MCF 10A (cell line): ENCODE measurements at regions of chr6 and their contacts with region 1.

Region 1: DNA sequence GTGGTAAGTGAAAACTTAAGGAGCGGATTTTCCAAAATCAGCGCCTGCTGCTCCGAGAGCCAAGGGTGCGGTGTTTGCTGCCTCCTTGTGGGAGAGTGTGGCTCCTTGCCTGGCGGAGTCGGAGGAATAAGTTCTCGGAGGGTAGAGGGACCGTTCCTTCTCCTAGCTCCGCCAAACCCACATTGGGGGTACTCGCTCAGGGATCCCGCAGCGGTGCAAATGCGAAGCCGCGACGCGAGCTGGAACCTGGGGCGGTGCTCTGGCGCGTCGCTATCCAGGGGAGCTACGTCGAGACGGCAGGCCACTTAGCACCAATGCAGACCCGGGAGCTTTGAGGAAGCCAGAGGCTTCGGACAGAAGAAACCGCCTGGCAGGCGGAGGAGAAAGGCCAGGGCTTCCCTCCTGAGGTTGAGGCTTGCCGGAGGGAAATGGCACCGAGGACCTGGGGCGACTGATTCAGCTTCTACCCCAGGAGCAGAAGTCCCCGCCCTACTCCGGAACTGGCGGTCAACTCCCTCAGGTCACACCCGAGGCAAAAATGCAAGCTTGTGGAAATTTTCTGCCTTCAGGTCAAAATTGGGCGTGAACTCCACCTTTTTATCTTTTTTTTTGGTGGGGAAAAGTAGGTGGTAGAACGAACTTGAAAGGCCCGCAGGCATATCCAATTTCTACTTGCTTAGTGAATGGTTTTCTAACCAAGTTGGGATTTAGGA is 5.7 kb upstream of the DDX43 start:
- DNase-seq: peak; percentile 74
- H3K4me3 Mint-ChIP-seq: peak overlapping the region; percentile 83
- H3K27ac Mint-ChIP-seq: peak overlapping the region; percentile 51
- H3K4me1 Mint-ChIP-seq: no peaks in the 10 kb centered on the region
- H3K27me3 Mint-ChIP-seq: no peaks in the 10 kb centered on the region
- CTCF ChIP-seq: peak; percentile 77

Region 2: GRCh38 chr6:73129653-73130443 is 259.1 kb before region 1 on chr6:
- CTCF ChIA-PET with region 1: interaction called, 10 read pairs
- POLR2A ChIA-PET with region 1: no interaction called
- intact Hi-C with region 1: no loop called
- DNase-seq: peak; percentile 81
- H3K4me3 Mint-ChIP-seq: no peak overlapping the region
- H3K27ac Mint-ChIP-seq: peak overlapping the region; percentile 25
- H3K4me1 Mint-ChIP-seq: no peaks in the 10 kb centered on the region
- H3K27me3 Mint-ChIP-seq: no peaks in the 10 kb centered on the region
- CTCF ChIP-seq: peak; percentile 95

Region 3: DNA sequence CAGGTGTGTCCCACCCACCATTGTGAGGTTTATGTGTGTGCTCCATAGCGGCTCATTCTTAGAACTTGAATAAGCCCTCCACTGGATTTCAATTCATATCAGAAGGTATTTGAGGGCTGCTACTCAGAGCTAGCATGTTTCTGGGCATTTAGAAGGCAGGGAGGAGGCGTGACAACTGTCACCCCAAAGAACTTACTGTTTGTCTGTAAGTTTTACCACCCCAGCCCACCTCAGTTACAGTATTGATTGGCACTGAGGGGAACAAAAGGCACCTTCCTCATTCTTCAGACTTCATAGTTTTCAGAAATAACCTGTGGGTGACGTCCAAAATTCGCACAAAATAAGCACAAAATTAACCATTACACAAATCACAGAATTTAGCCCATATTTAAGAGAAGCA is 245.4 kb before region 1 on chr6:
- CTCF ChIA-PET with region 1: no interaction called
- POLR2A ChIA-PET with region 1: no interaction called
- intact Hi-C with region 1: no loop called
- DNase-seq: no peak
- H3K4me3 Mint-ChIP-seq: no peak overlapping the region
- H3K27ac Mint-ChIP-seq: no peak overlapping the region
- H3K4me1 Mint-ChIP-seq: no peaks in the 10 kb centered on the region
- H3K27me3 Mint-ChIP-seq: no peaks in the 10 kb centered on the region
- CTCF ChIP-seq: no peak

Region 4: GRCh38 chr6:73156832-73157773 is 231.9 kb before region 1 on chr6:
- CTCF ChIA-PET with region 1: no interaction called
- POLR2A ChIA-PET with region 1: no interaction called
- intact Hi-C with region 1: no loop called
- DNase-seq: no peak
- H3K4me3 Mint-ChIP-seq: no peak overlapping the region
- H3K27ac Mint-ChIP-seq: no peak overlapping the region
- H3K4me1 Mint-ChIP-seq: no peaks in the 10 kb centered on the region
- H3K27me3 Mint-ChIP-seq: no peaks in the 10 kb centered on the region
- CTCF ChIP-seq: no peak

Region 5: GRCh38 chr6:73285674-73286283 is 103.2 kb before region 1 on chr6:
- CTCF ChIA-PET with region 1: interaction called, 40 read pairs
- POLR2A ChIA-PET with region 1: interaction called, 3 read pairs
- intact Hi-C with region 1: loop called (anchors 1 kb)
- DNase-seq: peak; percentile 63
- H3K4me3 Mint-ChIP-seq: no peak overlapping the region
- H3K27ac Mint-ChIP-seq: no peak overlapping the region
- H3K4me1 Mint-ChIP-seq: peaks cover 6% of the 10 kb centered on the region
- H3K27me3 Mint-ChIP-seq: no peaks in the 10 kb centered on the region
- CTCF ChIP-seq: peak; percentile 35

Region 6: GRCh38 chr6:73340048-73340447 is 48.9 kb before region 1 on chr6:
- CTCF ChIA-PET with region 1: interaction called, 12 read pairs
- POLR2A ChIA-PET with region 1: no interaction called
- intact Hi-C with region 1: no loop called
- DNase-seq: no peak
- H3K4me3 Mint-ChIP-seq: no peak overlapping the region
- H3K27ac Mint-ChIP-seq: no peak overlapping the region
- H3K4me1 Mint-ChIP-seq: no peaks in the 10 kb centered on the region
- H3K27me3 Mint-ChIP-seq: no peaks in the 10 kb centered on the region
- CTCF ChIP-seq: no peak

Region 7: DNA sequence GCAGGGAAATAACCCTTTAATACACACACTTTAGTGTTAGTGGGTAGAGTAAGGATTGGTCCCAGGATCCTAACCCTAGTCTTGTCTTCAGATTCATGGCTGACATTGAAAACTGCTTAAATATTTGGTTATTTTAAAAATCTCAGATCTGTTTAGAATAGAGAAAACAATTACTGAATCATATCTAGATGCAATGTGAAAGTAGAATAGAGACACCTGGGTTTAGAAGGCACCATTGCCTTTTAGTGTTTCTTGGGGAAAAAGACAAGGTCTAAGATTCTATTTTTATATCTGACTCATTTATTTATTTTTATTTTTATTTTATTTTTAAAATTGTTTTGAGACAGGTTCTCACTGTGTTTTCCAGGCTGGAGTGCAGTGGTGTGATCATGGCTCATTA is 11.7 kb after region 1 on chr6:
- CTCF ChIA-PET with region 1: interaction called, 19 read pairs
- POLR2A ChIA-PET with region 1: no interaction called
- intact Hi-C with region 1: no loop called
- DNase-seq: no peak
- H3K4me3 Mint-ChIP-seq: no peak overlapping the region
- H3K27ac Mint-ChIP-seq: no peak overlapping the region
- H3K4me1 Mint-ChIP-seq: no peaks in the 10 kb centered on the region
- H3K27me3 Mint-ChIP-seq: no peaks in the 10 kb centered on the region
- CTCF ChIP-seq: no peak